Mammary epithelial cell (primary cell): ENCODE measurements at regions of chr2 and their contacts with region 1.

Region 1: DNA sequence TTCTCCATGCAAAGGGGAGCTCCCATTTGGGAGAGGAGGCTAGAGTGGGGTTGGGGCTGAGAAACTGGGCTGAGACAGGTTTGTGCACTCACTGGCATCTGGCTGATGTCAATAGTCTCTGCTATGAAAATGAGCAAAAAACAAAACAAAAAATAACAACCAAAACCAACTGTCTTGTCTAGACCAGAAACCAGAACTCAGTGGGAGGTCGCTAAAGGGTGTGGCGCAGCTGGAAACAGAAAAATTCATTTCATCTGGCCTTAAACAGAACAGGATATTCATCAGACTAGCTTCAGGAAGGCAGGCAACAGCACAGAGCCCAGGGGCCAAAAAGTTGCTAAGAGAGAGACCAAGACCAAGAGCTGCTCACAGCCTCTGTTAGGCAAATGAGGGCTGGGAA is 126.1 kb downstream of the THNSL2 start:
- DNase-seq: no peak
- H3K4me3 ChIP-seq: no peak overlapping the region
- H3K27ac ChIP-seq: no peak overlapping the region
- H3K4me1 ChIP-seq: no peaks in the 10 kb centered on the region
- H3K27me3 ChIP-seq: no peaks in the 10 kb centered on the region
- CTCF ChIP-seq: no peak

Region 2: DNA sequence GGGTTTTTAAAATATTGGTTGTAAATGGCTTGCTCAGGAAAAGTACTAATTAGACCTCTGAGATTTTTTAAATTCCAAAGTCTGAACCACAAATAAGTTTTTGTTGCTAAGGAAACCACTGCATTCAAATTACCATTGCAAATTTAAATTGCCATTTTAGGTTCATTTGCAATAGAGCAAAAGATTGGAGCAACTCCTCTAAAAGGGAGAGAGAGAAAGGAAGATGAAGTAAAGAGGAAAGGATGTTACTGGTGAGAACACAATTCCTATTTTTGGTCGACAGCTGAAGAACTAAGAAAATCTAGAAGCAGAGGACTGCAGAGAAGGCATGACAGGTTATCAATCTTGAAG is 81.4 kb after region 1 on chr2:
- CTCF ChIA-PET with region 1: no interaction called
- dilution Hi-C with region 1: loop called (anchors 5 kb)
- in situ Hi-C with region 1: no loop called
- intact Hi-C with region 1: no loop called
- DNase-seq: no peak
- H3K4me3 ChIP-seq: no peak overlapping the region
- H3K27ac ChIP-seq: no peak overlapping the region
- H3K4me1 ChIP-seq: no peaks in the 10 kb centered on the region
- H3K27me3 ChIP-seq: no peaks in the 10 kb centered on the region
- CTCF ChIP-seq: no peak